Left lung (tissue), 14 donors: ENCODE measurements at regions of chr12 and their contacts with region 1.

Region 1: DNA sequence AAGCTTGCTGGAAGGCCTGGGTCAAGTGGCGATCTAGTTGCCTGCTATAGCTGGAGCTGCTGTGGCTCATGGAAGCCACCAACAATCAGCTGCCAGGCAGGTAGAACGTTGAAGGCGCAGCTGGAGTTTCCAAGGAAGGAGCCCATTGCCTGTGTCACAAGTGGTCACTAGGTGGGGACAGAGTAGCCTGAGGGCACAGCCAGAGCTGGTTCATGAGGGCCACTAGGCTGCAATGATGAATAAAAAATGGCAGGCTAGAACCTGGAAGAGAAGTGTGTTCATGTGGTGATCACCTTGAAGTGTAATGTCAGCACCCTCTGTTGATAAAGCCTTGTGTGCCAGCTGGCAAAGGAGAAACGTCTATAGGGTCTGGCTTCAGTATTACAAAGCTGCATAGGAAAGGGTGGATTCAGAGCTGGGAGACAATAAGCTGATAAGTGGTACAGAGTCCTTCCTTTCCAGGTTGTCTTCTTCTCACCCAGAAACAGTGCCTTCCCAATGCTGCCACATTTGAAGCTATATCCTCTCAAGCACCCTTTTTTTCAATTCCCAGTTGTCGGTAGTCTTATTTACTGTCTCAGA is 165.8 kb downstream of the EMP1 start:
- DNase-seq: peak in 2 of 4 donors; percentile 51 to 61
- ATAC-seq: peak; percentile 100
- H3K4me3 ChIP-seq: no peak overlapping the region
- H3K27ac ChIP-seq: no peak overlapping the region
- H3K4me1 ChIP-seq: no peaks in the 10 kb centered on the region
- H3K27me3 ChIP-seq: peaks cover 3 to 35% of the 10 kb centered on the region in 2 donors
- CTCF ChIP-seq: peak; percentile 76 to 78

Region 2: DNA sequence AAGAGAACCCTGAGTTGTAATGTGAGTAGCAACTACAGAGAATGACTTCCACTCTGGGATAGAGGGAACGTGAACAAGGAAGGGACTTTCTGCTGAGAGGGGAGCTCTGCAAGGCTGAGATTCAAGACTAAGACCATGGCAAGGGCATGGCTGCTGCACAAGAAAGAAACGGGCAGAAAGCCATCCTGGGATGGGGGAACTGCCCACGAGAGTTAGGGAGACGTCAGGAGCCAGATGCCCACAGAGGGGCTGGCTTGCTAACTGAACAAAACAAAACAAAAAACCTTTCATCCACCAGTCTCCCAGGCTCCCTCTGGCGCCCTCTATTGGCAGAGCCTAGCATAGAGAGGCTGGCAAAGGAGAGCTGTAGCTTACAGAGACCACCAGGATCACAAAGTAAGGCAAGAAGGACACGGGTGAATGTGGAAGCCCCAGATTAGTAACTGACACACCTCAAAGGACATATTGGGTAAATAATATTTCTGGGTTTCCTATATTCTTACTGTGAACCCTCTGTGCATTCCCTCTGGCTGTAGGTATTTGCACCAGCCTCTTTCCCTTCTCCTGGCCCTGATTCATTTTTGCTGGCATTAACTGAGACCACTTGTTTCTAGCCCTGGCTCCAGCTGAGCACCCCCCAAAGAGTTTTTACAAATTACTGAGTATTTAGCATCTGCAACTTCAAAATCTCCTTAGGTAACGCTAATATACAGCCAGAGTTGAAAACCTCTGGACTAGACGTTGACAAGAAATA is 172.5 kb after region 1 on chr12:
- intact Hi-C with region 1: loop called in 1 of 2 experiments (anchors 10 kb)
- DNase-seq: peak; percentile 41 to 71 (median 56)
- ATAC-seq: peak; percentile 84
- H3K4me3 ChIP-seq: no peak overlapping the region
- H3K27ac ChIP-seq: no peak overlapping the region
- H3K4me1 ChIP-seq: no peaks in the 10 kb centered on the region
- H3K27me3 ChIP-seq: no peaks in the 10 kb centered on the region
- CTCF ChIP-seq: peak; percentile 72 to 94